ENCODE measurements at regions of chr12 and their contacts with region 1.

Region 1: DNA sequence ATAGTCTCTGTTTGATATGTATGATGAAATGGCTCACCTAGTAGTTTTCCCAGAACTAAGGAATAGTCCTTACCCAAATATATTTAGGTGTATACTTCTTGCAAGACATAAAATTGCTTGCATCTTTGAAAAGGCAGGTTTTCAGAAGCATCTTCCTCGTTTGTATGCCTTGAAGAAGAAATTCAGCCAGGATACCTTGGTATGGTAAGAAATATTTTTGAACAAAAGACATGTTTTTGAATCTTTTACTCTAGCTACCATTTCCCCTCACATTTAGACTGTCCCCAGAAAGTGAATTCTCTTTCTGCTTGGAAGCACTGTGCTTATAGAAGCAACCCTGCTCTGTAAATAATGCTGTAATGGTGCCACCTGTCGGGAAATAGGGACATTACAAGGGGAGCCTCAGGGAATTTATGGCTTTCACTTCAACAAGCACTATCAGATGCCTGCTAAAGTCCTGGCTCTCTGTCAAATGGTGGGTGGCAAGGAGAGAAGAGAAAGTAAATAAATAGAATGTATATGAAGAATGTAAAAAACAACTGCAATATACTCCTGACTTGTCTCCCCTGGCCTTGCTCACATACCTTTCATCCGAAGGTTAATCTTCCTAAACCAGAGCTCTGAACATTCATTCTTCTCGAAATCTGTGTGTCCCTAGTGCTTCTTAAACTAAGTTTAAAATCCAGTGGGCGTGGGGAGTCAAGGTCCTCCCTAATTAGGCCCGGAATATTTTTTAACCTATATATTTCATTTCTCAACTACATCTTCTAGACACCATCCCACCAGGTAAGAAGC is 6.1 kb downstream of the CCDC184 start:
- DNase-seq: peak; percentile 29 to 72 (median 62)
- ATAC-seq: peak; percentile 91
- H3K4me3 ChIP-seq: no peak overlapping the region
- H3K4me3 Mint-ChIP-seq: no peak overlapping the region
- H3K27ac ChIP-seq: no peak overlapping the region
- H3K27ac Mint-ChIP-seq: no peak overlapping the region
- H3K4me1 ChIP-seq: peaks cover 0 to under 1% of the 10 kb centered on the region in 2 donors
- H3K4me1 Mint-ChIP-seq: peaks cover 0 to 12% (median 0%) of the 10 kb centered on the region in 7 donors
- H3K27me3 ChIP-seq: no peaks in the 10 kb centered on the region
- H3K27me3 Mint-ChIP-seq: peaks cover 16 to 76% (median 22%) of the 10 kb centered on the region in 5 donors

Region 2: GRCh38 chr12:47941851-47942601 is 247.5 kb before region 1 on chr12:
- CTCF ChIA-PET with region 1: no interaction called
- POLR2A ChIA-PET with region 1: no interaction called
- intact Hi-C with region 1: loop called in 1 of 2 experiments (anchors 1 kb)
- DNase-seq: peak in 7 of 9 donors; percentile 24 to 55 (median 45)
- ATAC-seq: peak; percentile 14
- H3K4me3 ChIP-seq: no peak overlapping the region
- H3K4me3 Mint-ChIP-seq: no peak overlapping the region
- H3K27ac ChIP-seq: no peak overlapping the region
- H3K27ac Mint-ChIP-seq: no peak overlapping the region
- H3K4me1 ChIP-seq: no peaks in the 10 kb centered on the region
- H3K4me1 Mint-ChIP-seq: peaks cover 0 to 12% (median 7%) of the 10 kb centered on the region in 7 donors
- H3K27me3 ChIP-seq: no peaks in the 10 kb centered on the region
- H3K27me3 Mint-ChIP-seq: peaks cover 5 to 26% (median 25%) of the 10 kb centered on the region in 5 donors

Region 3: DNA sequence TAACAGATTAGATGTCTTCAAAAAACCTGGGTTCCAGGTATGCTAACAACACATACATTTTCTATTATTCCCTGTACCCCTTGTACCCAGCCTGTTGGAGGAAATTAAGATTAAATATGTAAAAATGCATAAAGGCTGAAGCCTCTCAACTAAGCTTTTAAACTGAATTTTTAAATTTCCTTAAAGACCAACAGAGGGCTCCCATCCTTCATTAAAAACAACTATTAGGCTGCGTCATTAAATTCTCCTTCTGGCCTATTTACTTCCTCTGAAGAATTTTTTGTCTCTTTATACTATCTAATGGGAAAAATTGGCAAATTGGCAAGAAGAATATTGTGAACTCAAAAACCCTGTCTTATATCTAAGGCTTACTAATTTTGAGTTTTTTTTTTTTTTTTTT is 105.5 kb before region 1 on chr12:
- CTCF ChIA-PET with region 1: interaction called, 4 read pairs
- POLR2A ChIA-PET with region 1: no interaction called
- intact Hi-C with region 1: loop called in 1 of 2 experiments (anchors 1 kb)
- DNase-seq: no peak
- ATAC-seq: no peak
- H3K4me3 ChIP-seq: no peak overlapping the region
- H3K4me3 Mint-ChIP-seq: no peak overlapping the region
- H3K27ac ChIP-seq: no peak overlapping the region
- H3K27ac Mint-ChIP-seq: no peak overlapping the region
- H3K4me1 ChIP-seq: no peaks in the 10 kb centered on the region
- H3K4me1 Mint-ChIP-seq: peaks cover 0 to 2% (median 0%) of the 10 kb centered on the region in 7 donors
- H3K27me3 ChIP-seq: no peaks in the 10 kb centered on the region
- H3K27me3 Mint-ChIP-seq: no peaks in the 10 kb centered on the region

Measured in naive thymus-derived CD4-positive, alpha-beta T cell (primary cell).